ENCODE measurements at regions of chr3 and their contacts with region 1.

Region 1: DNA sequence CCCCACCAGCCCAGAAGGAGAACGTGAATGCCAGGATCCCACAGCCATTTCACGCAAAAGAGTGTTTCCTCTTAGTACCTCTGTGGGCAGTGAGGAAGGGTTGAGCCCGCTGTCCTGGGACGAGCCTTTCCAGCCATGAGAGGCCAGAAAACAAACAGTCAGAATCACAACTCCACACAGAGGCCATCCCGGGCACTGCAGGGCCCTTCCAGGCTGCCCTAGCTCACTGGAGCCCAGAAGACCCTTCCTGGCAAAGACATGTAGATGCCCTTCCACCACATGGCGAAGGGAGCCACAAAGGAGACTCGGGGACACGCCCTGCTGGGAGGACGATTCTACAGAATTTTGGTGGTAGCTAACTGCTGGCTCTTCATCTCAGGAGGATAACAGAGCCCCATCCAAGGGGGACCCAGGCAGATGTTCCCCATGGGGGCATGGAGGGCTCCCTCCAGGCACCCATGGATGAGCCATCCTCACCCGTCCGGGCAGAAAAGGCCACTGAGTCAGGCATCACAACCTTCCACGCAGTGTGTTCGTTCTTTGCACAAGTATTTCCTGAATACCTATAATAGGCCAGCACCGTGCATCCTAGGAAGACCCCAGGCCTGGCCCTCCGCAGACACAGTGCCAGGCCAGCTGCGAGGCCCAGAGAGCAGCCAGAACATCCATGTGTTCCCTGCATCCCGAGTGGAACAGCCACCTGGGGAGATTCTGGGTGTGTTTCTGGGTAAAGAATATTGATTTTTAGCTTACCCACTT is 47.2 kb downstream of the SLC12A8 start:
- DNase-seq: peak in 1 of 2 donors; percentile 50
- ATAC-seq: peak; percentile 76 to 89 (median 85)
- H3K4me3 ChIP-seq: no peak overlapping the region
- H3K27ac ChIP-seq: no peak overlapping the region
- H3K4me1 ChIP-seq: peaks cover 0 to 44% (median 24%) of the 10 kb centered on the region in 9 donors
- H3K27me3 ChIP-seq: no peaks in the 10 kb centered on the region
- CTCF ChIP-seq: peak; percentile 69 to 85 (median 81)

Region 2: DNA sequence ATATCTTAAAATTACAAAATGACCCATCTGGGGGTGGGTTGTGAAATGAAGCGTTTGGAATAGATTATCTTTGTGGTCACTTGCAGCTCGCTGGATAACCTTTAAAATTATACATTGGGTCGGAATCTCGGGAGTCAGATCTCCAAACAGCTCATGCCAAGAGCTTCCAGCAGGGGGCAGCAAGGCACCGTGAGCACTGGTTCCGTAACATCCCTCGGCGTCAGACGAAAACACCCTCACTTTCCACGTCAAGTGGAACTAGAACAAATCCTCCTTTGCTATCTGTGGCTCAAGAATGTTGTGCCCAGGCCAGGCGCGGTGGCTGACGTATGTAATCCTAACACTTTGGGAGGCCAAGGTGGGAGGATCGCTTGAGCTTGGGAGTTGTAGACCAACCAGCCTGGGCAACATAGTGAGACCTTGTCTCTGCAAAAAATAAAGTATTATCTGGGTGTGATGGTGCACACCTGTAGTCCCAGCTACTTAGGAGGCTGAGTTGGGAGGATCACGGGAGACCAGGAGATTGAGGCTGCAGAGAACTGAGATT is 404.0 kb before region 1 on chr3:
- intact Hi-C with region 1: loop called in 2 of 10 experiments (anchors 10 kb)
- DNase-seq: peak; percentile 88 to 89
- ATAC-seq: peak; percentile 87 to 94 (median 89)
- H3K4me3 ChIP-seq: no peak overlapping the region
- H3K27ac ChIP-seq: peak overlapping the region in 6 of 10 donors; percentile 4 to 64 (median 52)
- H3K4me1 ChIP-seq: peaks cover 0 to 22% (median 13%) of the 10 kb centered on the region in 9 donors
- H3K27me3 ChIP-seq: no peaks in the 10 kb centered on the region
- CTCF ChIP-seq: peak; percentile 96 to 99 (median 97)

Region 3: GRCh38 chr3:124935264-124935663 is 230.1 kb before region 1 on chr3:
- intact Hi-C with region 1: loop called in 1 of 10 experiments (anchors 5 kb)
- DNase-seq: no peak
- ATAC-seq: no peak
- H3K4me3 ChIP-seq: no peak overlapping the region
- H3K27ac ChIP-seq: no peak overlapping the region
- H3K4me1 ChIP-seq: no peaks in the 10 kb centered on the region
- H3K27me3 ChIP-seq: no peaks in the 10 kb centered on the region
- CTCF ChIP-seq: no peak

Region 4: DNA sequence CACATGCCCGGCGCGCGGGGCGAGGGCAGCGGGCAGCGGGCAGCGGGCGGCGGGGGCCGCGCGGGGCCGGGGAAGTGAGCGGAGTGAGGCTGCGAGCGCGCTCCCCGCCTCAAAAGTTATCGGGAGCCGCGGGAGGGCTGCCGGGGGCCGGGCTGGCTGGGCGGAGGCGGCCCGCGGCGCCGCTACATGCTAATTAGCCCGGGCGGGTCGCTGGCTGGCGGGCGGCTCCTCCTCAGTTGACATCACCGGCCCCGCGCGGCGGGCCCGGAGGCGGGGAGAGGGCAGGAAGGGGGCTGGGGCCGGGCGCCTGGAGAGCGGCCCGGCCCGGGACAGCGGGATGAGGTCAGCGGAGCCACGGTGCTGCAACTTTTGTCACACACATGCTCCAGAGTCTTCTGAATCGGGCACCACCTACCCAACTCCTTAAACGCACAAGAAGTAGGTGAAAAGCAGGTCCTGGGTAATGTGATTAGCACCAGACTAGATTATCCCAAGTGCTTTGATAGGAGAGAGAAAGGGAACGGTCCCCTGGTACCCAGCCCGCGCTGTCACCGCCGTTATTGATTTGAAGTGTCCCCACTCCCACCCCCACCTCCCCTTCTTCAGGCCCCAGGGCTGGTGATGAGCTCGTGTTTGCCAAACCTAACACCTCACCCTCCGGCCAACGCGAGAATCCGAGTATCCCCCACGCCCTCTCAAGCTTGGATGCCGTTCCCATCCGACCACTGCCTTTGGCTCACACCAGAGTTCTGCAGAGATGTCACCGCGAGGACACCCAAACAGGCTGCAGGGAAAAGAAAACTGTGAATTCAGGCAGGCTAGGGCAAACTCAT is 109.2 kb before region 1 on chr3 and contains the start of gene HEG1:
- intact Hi-C with region 1: loop called in 1 of 10 experiments (anchors 5 kb)
- DNase-seq: peak; percentile 93 to 94
- ATAC-seq: peak; percentile 89 to 94 (median 92)
- H3K4me3 ChIP-seq: peak within 1 kb of the TSS; percentile 79 to 96 (median 85)
- H3K27ac ChIP-seq: peak within 1 kb of the TSS; percentile 92 to 99 (median 96)
- H3K4me1 ChIP-seq: peaks cover 20 to 76% (median 63%) of the 10 kb centered on the region in 9 donors
- H3K27me3 ChIP-seq: no peaks in the 10 kb centered on the region
- CTCF ChIP-seq: no peak
- total RNA-seq, gene HEG1: 79.0 to 186 (median 143) TPM

Region 5: DNA sequence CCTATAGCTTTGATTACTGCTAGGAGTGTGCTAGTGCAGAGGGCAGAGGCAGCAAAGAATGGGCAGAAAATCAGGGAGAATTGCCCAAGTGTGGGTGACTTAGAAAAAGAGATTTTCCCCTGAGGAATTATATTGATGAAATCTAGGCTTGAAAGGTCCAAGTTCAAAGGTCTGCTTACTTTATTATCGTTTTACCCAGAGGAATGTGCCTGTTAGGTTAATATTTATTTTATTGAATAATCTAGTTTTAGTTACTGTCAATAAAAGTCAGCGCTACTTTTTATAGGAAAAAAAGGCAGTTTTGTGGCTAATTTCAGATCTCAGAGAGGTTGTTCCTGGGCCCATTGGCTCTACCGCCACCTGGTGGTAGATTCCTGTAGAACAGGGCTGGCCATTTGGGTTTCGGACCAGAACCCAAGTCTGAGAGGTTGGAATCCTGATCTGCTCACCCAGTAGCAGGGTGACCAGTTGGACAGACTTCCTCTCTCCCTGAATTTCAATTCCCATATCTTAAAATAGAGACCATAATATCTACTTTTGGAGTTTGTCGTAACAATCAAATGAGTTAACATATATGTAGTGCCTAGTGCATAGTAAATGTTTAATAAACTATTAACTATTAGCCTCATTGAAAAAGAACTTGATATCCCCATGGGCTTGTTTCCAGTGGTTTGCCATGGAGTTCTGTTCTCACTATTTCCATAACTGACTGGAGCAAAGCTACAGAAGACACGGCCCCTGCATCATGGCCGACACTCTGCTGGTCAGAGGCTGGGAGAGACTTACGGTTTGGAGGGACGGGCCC is 272.5 kb after region 1 on chr3:
- intact Hi-C with region 1: loop called in 1 of 10 experiments (anchors 10 kb)
- DNase-seq: peak; percentile 29 to 44
- ATAC-seq: peak in 7 of 8 donors; percentile 34 to 69 (median 62)
- H3K4me3 ChIP-seq: no peak overlapping the region
- H3K27ac ChIP-seq: no peak overlapping the region
- H3K4me1 ChIP-seq: no peaks in the 10 kb centered on the region
- H3K27me3 ChIP-seq: no peaks in the 10 kb centered on the region
- CTCF ChIP-seq: peak in 8 of 9 donors; percentile 92 to 98 (median 96)

Measured in heart right ventricle (tissue), 16 donors.